ENCODE measurements at regions of chr11 and their contacts with region 1.

Region 1: GRCh38 chr11:14907411-14908213 is 15.6 kb upstream of the CYP2R1 start:
- DNase-seq: peak; percentile 94
- ATAC-seq: peak; percentile 75
- H3K4me3 Mint-ChIP-seq: no peak overlapping the region
- H3K27ac Mint-ChIP-seq: no peak overlapping the region
- H3K4me1 Mint-ChIP-seq: peaks cover 41% of the 10 kb centered on the region
- H3K27me3 Mint-ChIP-seq: no peaks in the 10 kb centered on the region

Region 2: GRCh38 chr11:14358729-14359439 is 548.7 kb before region 1 on chr11 and contains the start of gene RRAS2:
- CTCF ChIA-PET with region 1: no interaction called
- POLR2A ChIA-PET with region 1: no interaction called
- intact Hi-C with region 1: loop called in 1 of 2 experiments (anchors 5 kb)
- DNase-seq: peak; percentile 88
- ATAC-seq: peak; percentile 93
- H3K4me3 Mint-ChIP-seq: peak within 1 kb of the TSS; percentile 95
- H3K27ac Mint-ChIP-seq: peak within 1 kb of the TSS; percentile 89
- H3K4me1 Mint-ChIP-seq: peaks cover 26% of the 10 kb centered on the region
- H3K27me3 Mint-ChIP-seq: no peaks in the 10 kb centered on the region
- total RNA-seq, gene RRAS2: 35.0 to 48.0 TPM

Region 3: DNA sequence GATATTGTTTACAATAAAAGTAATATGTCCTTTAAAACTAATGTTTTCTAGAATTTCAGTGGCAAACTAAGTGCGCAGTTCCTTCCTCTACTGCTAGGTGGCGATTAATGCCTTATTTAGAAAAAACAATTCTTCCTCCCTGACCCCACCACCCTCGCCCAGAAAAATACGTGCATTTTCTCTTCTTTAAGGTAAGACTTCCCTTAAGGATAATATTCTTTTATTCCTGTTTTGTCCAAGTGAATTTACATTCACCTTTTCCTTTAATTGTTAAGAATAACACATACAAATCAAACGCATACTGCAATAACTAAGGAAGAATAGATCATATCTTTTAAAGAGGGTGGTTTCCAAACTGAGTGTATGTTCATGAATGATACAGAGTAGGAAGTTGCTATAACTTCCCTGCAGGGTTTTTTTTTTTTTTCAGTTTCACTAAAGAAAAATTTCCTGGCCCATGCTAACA is 370.4 kb before region 1 on chr11:
- CTCF ChIA-PET with region 1: interaction called, 20 read pairs
- POLR2A ChIA-PET with region 1: no interaction called
- intact Hi-C with region 1: loop called (anchors 1 kb)
- DNase-seq: peak; percentile 59
- ATAC-seq: peak; percentile 90
- H3K4me3 Mint-ChIP-seq: peak overlapping the region; percentile 59
- H3K27ac Mint-ChIP-seq: peak overlapping the region; percentile 87
- H3K4me1 Mint-ChIP-seq: peaks cover 22% of the 10 kb centered on the region
- H3K27me3 Mint-ChIP-seq: no peaks in the 10 kb centered on the region

Region 4: DNA sequence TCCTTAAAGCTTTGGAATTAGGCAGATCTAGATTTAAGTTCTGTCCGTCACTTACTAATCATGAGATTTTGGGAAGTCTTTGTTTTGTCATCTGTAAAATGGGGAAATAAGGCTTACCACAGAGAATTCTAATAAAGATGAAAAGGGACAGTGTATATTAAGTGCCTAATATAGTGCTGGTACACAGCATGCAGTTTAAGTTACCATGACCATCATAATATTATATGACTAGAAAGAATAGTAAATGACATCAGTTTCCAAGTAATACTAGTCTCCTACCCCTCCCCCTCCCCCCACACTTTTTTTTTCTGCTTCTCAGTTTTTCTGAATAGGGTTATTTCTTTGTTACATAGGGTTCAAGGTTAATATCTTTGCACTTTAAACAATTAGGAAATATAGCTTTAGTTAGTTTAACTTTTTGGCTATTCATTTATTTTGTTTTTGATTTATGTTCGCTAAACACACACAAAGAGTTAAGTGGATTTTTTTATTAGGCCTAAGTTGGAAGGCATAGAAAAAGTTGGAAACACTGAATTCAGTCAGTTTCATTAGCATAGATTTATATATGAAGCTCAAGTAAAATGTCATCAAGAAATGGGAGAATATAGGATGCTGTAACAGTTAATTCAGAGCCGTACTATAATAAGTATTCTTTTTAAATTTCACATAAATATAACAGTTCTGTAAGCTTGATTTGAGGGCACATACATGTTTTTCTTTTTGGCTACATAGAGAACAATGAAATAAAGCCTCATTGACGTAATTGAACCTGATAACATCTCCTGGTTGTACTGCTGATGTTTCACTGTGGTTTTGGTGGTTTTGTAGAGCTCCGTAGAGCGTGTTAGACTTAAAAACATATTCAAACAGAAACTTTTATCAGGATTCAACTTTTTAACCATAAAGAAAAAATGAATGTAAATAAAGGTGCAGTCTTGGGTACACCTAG is 142.8 kb before region 1 on chr11:
- CTCF ChIA-PET with region 1: interaction called, 22 read pairs
- POLR2A ChIA-PET with region 1: interaction called, 3 read pairs
- intact Hi-C with region 1: no loop called
- DNase-seq: peak; percentile 50
- ATAC-seq: peak; percentile 76
- H3K4me3 Mint-ChIP-seq: peak overlapping the region; percentile 62
- H3K27ac Mint-ChIP-seq: no peak overlapping the region
- H3K4me1 Mint-ChIP-seq: peaks cover 42% of the 10 kb centered on the region
- H3K27me3 Mint-ChIP-seq: no peaks in the 10 kb centered on the region

Region 5: GRCh38 chr11:14892036-14892567 is 15.5 kb before region 1 on chr11 and contains the start of gene CYP2R1:
- CTCF ChIA-PET with region 1: interaction called, 52 read pairs
- POLR2A ChIA-PET with region 1: interaction called, 4 read pairs
- intact Hi-C with region 1: loop called (anchors 1 kb)
- DNase-seq: peak; percentile 94
- ATAC-seq: peak; percentile 84
- H3K4me3 Mint-ChIP-seq: peak within 1 kb of the TSS; percentile 81
- H3K27ac Mint-ChIP-seq: peak within 1 kb of the TSS; percentile 96
- H3K4me1 Mint-ChIP-seq: peaks cover 52% of the 10 kb centered on the region
- H3K27me3 Mint-ChIP-seq: peaks cover 2% of the 10 kb centered on the region
- total RNA-seq, gene CYP2R1: 13.1 to 14.8 TPM

Region 6: GRCh38 chr11:14974515-14975251 is 67.1 kb after region 1 on chr11:
- CTCF ChIA-PET with region 1: interaction called, 43 read pairs
- POLR2A ChIA-PET with region 1: no interaction called
- intact Hi-C with region 1: loop called in 1 of 2 experiments (anchors 2 kb)
- DNase-seq: peak; percentile 85
- ATAC-seq: peak; percentile 72
- H3K4me3 Mint-ChIP-seq: peak overlapping the region; percentile 54
- H3K27ac Mint-ChIP-seq: no peak overlapping the region
- H3K4me1 Mint-ChIP-seq: peaks cover 27% of the 10 kb centered on the region
- H3K27me3 Mint-ChIP-seq: peaks cover 67% of the 10 kb centered on the region

Region 7: GRCh38 chr11:15169815-15170551 is 262.4 kb after region 1 on chr11:
- CTCF ChIA-PET with region 1: no interaction called
- POLR2A ChIA-PET with region 1: no interaction called
- intact Hi-C with region 1: no loop called
- DNase-seq: no peak
- ATAC-seq: no peak
- H3K4me3 Mint-ChIP-seq: no peak overlapping the region
- H3K27ac Mint-ChIP-seq: no peak overlapping the region
- H3K4me1 Mint-ChIP-seq: no peaks in the 10 kb centered on the region
- H3K27me3 Mint-ChIP-seq: peaks cover 17% of the 10 kb centered on the region

Region 8: GRCh38 chr11:15208378-15209222 is 301.0 kb after region 1 on chr11:
- CTCF ChIA-PET with region 1: interaction called, 10 read pairs
- POLR2A ChIA-PET with region 1: no interaction called
- intact Hi-C with region 1: loop called (anchors 1 to 2 kb)
- DNase-seq: peak; percentile 87
- ATAC-seq: peak; percentile 97
- H3K4me3 Mint-ChIP-seq: no peak overlapping the region
- H3K27ac Mint-ChIP-seq: no peak overlapping the region
- H3K4me1 Mint-ChIP-seq: no peaks in the 10 kb centered on the region
- H3K27me3 Mint-ChIP-seq: no peaks in the 10 kb centered on the region

Measured in activated CD4-positive, alpha-beta T cell treated with anti-CD3 and anti-CD28 coated beads for 36 hours (primary cell).